ENCODE measurements at regions of chr21 and their contacts with region 1.

Region 1: DNA sequence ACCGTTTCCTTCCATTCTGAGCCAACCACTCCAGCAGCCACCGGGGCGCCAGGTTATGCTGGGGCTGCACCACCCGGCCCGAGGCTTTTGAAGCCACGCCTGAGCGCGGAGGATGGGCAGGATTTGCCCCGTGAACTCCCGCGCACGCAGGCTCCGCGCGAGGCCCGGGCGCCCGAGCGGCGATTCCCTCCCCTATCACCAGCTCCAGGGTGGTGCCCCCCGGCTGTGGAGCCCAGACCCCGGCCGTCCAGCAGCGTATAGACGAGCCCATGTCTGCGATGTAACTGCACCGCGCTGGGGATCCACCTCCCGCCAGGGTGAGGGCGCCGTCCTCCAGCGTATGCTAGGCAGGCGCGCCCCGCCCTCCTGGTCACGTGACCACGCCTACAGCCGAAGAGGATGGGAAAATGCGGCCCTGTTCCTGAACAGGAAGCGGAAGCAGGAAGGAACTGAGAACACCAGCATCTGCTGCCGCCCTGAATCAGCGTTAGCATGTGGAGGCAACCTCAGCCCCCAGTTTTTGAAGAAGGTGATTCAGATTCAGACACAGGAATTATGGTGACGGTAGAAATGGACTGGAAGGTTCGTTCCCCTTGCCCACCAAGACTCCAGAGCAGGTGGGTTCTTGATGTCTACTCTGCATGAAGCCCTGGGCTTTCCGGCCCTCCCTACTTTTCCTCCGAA is 46.0 kb downstream of the VPS26C start:
- DNase-seq: peak; percentile 93
- ATAC-seq: peak; percentile 81
- H3K4me3 Mint-ChIP-seq: peak overlapping the region; percentile 83
- H3K27ac Mint-ChIP-seq: peak overlapping the region; percentile 88
- H3K4me1 Mint-ChIP-seq: peaks cover 56% of the 10 kb centered on the region
- H3K27me3 Mint-ChIP-seq: no peaks in the 10 kb centered on the region

Region 2: DNA sequence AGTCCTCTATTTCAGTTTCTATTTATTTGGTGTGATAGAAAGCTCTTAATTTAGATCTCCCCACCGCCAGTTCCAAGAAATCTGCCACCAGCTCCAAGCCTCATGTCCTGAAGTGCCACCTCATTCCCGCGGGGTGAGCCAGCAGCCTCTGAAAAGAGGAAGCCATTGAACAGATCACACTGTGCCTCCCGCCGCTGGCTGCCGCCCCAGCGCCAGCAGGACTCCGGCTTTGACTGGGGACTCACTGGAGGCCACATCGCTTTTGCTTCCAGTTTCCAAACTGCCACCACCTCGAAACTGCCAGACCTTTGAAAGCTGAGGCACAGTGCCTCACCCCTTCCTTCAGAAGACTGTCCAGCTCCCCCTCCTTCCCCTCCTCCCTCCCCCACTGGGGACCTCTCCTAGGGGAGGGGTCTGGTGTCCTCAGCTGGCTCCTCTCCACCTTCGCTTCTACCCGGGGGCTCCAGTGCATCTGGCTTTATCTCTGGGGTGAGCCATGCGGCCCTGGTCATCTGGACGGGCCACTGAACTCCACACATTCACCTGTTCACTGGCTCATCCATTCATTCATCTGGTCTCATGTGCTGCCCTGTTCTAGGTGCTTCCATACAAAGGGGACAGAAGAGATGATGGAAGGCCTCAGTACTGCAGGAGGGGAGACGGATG is 12.9 kb before region 1 on chr21:
- POLR2A ChIA-PET with region 1: interaction called, 16 read pairs
- DNase-seq: peak; percentile 52
- ATAC-seq: peak; percentile 83
- H3K4me3 Mint-ChIP-seq: peak overlapping the region; percentile 76
- H3K27ac Mint-ChIP-seq: peak overlapping the region; percentile 91
- H3K4me1 Mint-ChIP-seq: peaks cover 22% of the 10 kb centered on the region
- H3K27me3 Mint-ChIP-seq: peaks cover 4% of the 10 kb centered on the region

Region 3: GRCh38 chr21:37237764-37238163 is 16.6 kb after region 1 on chr21:
- POLR2A ChIA-PET with region 1: interaction called, 10 read pairs
- DNase-seq: no peak
- ATAC-seq: peak; percentile 96
- H3K4me3 Mint-ChIP-seq: peak overlapping the region; percentile 71
- H3K27ac Mint-ChIP-seq: peak overlapping the region; percentile 91
- H3K4me1 Mint-ChIP-seq: peaks cover 55% of the 10 kb centered on the region
- H3K27me3 Mint-ChIP-seq: no peaks in the 10 kb centered on the region

Region 4: DNA sequence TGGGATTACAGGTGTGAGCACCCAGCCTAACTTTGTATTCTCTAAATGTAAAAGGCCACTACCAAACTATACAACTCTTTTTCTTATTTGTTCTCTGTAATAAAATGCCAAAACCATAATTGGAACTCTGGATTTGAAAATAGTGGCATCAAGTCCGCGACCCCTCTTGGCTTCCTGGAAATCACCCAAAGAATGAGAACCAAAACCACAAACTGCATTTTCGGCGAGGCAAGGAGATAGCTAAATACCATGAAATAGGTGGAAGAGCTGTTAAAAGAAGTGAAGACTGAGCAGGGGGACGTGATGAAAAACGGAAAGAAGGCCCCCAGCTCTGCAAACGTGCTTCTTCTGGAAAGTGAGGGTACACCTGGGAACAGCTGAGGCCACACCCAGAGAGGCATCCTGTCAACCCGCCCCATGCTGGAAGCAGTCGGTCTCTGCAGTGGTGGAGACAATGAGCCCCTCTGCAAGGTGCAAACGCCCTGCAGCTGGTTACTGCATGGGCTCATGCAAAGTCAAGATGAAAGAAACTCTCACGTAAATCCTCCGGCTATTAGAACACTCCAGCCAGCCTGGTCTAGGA is 23.5 kb after region 1 on chr21:
- POLR2A ChIA-PET with region 1: interaction called, 22 read pairs
- DNase-seq: peak; percentile 62
- ATAC-seq: peak; percentile 88
- H3K4me3 Mint-ChIP-seq: peak overlapping the region; percentile 85
- H3K27ac Mint-ChIP-seq: peak overlapping the region; percentile 95
- H3K4me1 Mint-ChIP-seq: peaks cover 81% of the 10 kb centered on the region
- H3K27me3 Mint-ChIP-seq: no peaks in the 10 kb centered on the region

Region 5: GRCh38 chr21:37257967-37258877 is 37.1 kb after region 1 on chr21:
- POLR2A ChIA-PET with region 1: interaction called, 41 read pairs
- DNase-seq: peak; percentile 87
- ATAC-seq: peak; percentile 86
- H3K4me3 Mint-ChIP-seq: peak overlapping the region; percentile 83
- H3K27ac Mint-ChIP-seq: peak overlapping the region; percentile 99
- H3K4me1 Mint-ChIP-seq: peaks cover 54% of the 10 kb centered on the region
- H3K27me3 Mint-ChIP-seq: no peaks in the 10 kb centered on the region

Region 6: GRCh38 chr21:37267269-37268184 is 46.4 kb after region 1 on chr21 and contains the start of gene VPS26C:
- POLR2A ChIA-PET with region 1: interaction called, 25 read pairs
- DNase-seq: peak; percentile 97
- ATAC-seq: peak; percentile 91
- H3K4me3 Mint-ChIP-seq: peak within 1 kb of the TSS; percentile 98
- H3K27ac Mint-ChIP-seq: peak within 1 kb of the TSS; percentile 98
- H3K4me1 Mint-ChIP-seq: peaks cover 36% of the 10 kb centered on the region
- H3K27me3 Mint-ChIP-seq: no peaks in the 10 kb centered on the region
- total RNA-seq, gene VPS26C: 94.0 to 97.3 TPM

Region 7: GRCh38 chr21:37366482-37367316 is 145.6 kb after region 1 on chr21 and contains the start of gene DYRK1A:
- POLR2A ChIA-PET with region 1: interaction called, 14 read pairs
- DNase-seq: peak; percentile 97
- ATAC-seq: peak; percentile 79
- H3K4me3 Mint-ChIP-seq: peak within 1 kb of the TSS; percentile 99
- H3K27ac Mint-ChIP-seq: peak within 1 kb of the TSS; percentile 99
- H3K4me1 Mint-ChIP-seq: peaks cover 38% of the 10 kb centered on the region
- H3K27me3 Mint-ChIP-seq: no peaks in the 10 kb centered on the region
- total RNA-seq, gene DYRK1A: 109 to 122 TPM

Region 8: DNA sequence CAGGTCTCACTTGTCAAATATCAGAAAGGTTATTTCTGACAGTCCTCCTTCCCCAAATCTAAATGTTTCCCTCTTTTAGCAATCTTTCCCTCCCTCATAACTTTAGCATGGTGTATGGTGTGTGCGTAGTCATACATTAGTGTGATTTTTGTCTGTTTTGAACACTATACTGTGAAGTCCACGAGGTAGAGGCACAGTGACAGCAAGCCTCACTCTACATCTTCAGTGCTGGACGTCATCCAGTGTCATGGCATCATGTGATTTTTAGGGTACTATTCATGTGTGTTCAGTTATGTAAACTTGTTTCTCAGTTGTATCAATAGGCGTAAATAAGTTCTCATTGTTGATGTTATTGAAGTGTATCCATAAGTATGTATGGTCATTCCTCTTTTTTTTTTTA is 184.5 kb after region 1 on chr21:
- POLR2A ChIA-PET with region 1: no interaction called
- DNase-seq: no peak
- ATAC-seq: no peak
- H3K4me3 Mint-ChIP-seq: no peak overlapping the region
- H3K27ac Mint-ChIP-seq: no peak overlapping the region
- H3K4me1 Mint-ChIP-seq: peaks cover 39% of the 10 kb centered on the region
- H3K27me3 Mint-ChIP-seq: no peaks in the 10 kb centered on the region